Common myeloid progenitor, CD34-positive (primary cell): ENCODE measurements at regions of chr1 and their contacts with region 1.

Region 1: GRCh38 chr1:39196244-39197215 is 8.0 kb upstream of the MACF1 start:
- DNase-seq: peak; percentile 89 to 97 (median 95)
- H3K4me3 ChIP-seq: peak overlapping the region in 6 of 7 experiments; percentile 25 to 58 (median 43)
- H3K27ac ChIP-seq: peak overlapping the region; percentile 89 to 92
- H3K4me1 ChIP-seq: peaks cover 40 to 87% (median 67%) of the 10 kb centered on the region in 4 experiments
- H3K27me3 ChIP-seq: no peaks in the 10 kb centered on the region

Region 2: GRCh38 chr1:39116868-39117728 is 79.4 kb before region 1 on chr1:
- CTCF ChIA-PET with region 1: interaction called, 12 read pairs
- POLR2A ChIA-PET with region 1: no interaction called
- DNase-seq: no peak
- H3K4me3 ChIP-seq: peak overlapping the region in 1 of 7 experiments; percentile 4
- H3K27ac ChIP-seq: no peak overlapping the region
- H3K4me1 ChIP-seq: peaks cover 0 to 15% (median 3%) of the 10 kb centered on the region in 4 experiments
- H3K27me3 ChIP-seq: no peaks in the 10 kb centered on the region

Region 3: GRCh38 chr1:39183503-39184353 is 12.8 kb before region 1 on chr1:
- CTCF ChIA-PET with region 1: interaction called, 25 read pairs
- POLR2A ChIA-PET with region 1: no interaction called
- DNase-seq: peak; percentile 81 to 93 (median 91)
- H3K4me3 ChIP-seq: no peak overlapping the region
- H3K27ac ChIP-seq: peak overlapping the region; percentile 2 to 25
- H3K4me1 ChIP-seq: peaks cover 6 to 29% (median 20%) of the 10 kb centered on the region in 4 experiments
- H3K27me3 ChIP-seq: no peaks in the 10 kb centered on the region

Region 4: DNA sequence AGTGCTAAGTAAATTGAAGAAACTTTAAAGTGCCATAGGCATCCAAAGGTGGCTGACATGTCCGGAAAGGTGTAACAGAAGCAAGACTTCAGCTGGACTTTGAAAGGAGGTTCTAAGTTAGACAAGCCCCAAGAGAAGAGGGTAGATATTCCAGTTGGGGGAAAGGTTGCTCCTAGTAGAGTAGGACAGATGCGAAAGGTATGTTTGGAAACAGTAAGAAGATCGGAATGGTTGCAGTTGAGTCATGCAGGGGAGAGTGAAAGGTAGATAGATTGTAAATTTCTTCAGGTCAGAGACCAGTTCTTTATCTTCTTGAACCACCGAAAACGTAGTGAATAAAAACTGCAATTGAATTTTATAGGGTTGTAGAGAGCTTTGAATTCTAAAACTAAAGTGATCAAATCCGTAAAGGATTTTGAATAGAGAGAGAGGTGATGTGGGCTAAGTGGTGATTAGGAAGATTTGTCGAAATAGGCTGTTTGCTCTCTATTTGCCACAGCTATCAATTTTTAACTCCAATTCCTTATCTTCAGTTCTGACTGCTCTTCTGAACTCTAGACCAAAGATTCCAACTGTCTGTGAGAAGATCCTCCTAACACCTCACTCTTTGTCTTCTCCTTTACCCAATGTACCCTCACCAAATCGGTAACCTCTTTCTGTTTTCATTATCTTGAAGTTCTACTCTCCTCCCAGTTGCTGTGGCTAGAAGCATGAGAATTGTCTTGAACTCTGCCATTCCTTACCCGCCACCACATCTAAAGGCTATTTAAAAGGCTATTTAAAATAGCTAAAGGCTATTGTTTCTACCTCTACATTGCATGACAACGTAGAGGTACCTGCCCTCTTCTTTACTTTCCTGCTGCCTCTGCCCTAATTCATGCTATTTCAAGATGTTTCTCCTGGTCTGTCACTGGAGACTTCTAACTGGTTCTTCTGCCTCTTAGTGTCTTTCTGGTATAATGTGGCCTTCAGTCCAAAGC is 24.7 kb after region 1 on chr1:
- CTCF ChIA-PET with region 1: interaction called, 123 read pairs
- POLR2A ChIA-PET with region 1: no interaction called
- DNase-seq: no peak
- H3K4me3 ChIP-seq: no peak overlapping the region
- H3K27ac ChIP-seq: peak overlapping the region in 1 of 2 experiments; percentile 14
- H3K4me1 ChIP-seq: peaks cover 6 to 48% (median 28%) of the 10 kb centered on the region in 4 experiments
- H3K27me3 ChIP-seq: no peaks in the 10 kb centered on the region

Region 5: DNA sequence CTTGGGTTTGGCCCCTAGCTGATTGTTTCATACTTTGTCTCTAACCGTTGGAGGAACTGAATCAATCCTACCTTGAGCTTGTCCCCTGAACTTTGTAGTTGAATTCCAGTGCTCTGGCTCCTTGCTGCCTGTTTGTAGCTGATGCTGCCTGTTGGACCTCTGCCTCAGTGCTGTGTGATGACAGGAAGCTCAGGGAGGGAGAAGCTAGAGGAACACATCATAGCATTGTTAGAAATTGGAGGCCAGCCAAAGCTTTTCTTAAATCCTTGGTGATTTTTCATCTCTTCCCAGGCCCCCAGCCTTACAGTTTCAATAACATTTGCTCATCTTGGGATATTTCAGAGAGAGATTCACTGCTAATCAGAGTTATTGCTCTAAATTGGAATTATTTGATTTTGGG is 41.9 kb after region 1 on chr1:
- CTCF ChIA-PET with region 1: interaction called, 18 read pairs
- POLR2A ChIA-PET with region 1: no interaction called
- DNase-seq: no peak
- H3K4me3 ChIP-seq: no peak overlapping the region
- H3K27ac ChIP-seq: peak overlapping the region; percentile 17 to 37
- H3K4me1 ChIP-seq: peaks cover 0 to 8% (median 6%) of the 10 kb centered on the region in 4 experiments
- H3K27me3 ChIP-seq: no peaks in the 10 kb centered on the region

Region 6: DNA sequence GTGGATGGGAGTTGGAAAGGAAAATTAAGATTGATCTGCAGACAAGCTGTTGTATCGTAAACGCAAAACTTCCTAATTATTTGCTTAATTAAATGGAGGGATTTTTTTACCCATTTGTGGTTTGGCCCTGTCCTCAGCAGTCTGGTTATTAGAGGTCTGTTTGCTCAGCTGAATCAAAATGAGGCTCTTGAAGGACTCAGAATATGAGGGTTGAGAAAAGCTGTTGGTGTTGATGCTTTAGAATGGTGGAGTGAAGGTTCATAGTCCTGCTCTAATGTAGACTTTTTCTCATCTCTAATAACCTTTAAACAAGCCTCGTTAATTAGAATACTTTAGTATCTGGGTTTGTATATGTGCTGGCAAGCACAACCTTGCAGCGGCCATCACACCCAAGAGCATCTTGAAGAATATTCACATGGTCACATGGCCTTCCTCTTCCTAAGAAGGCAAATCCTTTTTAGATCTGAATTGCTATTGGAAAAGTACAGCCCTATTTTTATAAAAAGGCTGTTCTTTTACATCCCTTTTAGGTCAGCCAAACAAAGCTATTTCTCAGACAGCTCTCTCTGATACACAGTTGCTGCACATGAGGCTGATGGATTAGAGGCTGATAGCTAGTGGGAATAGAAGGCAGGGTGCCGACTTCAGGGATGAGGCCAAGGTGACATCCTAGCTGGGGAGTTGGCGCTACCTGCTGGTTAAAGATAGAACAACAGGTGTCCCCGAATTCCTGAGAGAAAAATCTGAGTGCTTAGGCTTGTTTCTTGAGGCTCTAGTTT is 61.8 kb after region 1 on chr1:
- CTCF ChIA-PET with region 1: interaction called, 251 read pairs
- POLR2A ChIA-PET with region 1: interaction called, 8 read pairs
- DNase-seq: peak; percentile 62 to 71 (median 65)
- H3K4me3 ChIP-seq: no peak overlapping the region
- H3K27ac ChIP-seq: peak overlapping the region in 1 of 2 experiments; percentile 33
- H3K4me1 ChIP-seq: peaks cover 3 to 17% (median 10%) of the 10 kb centered on the region in 4 experiments
- H3K27me3 ChIP-seq: no peaks in the 10 kb centered on the region

Region 7: GRCh38 chr1:39277879-39278278 is 81.3 kb after region 1 on chr1:
- CTCF ChIA-PET with region 1: interaction called, 12 read pairs
- POLR2A ChIA-PET with region 1: no interaction called
- DNase-seq: no peak
- H3K4me3 ChIP-seq: no peak overlapping the region
- H3K27ac ChIP-seq: no peak overlapping the region
- H3K4me1 ChIP-seq: peaks cover 0 to 2% (median 0%) of the 10 kb centered on the region in 4 experiments
- H3K27me3 ChIP-seq: no peaks in the 10 kb centered on the region